Heart right ventricle (tissue), 16 donors: ENCODE measurements at regions of chr20 and their contacts with region 1.

Region 1: GRCh38 chr20:48769069-48769879 is 58.5 kb downstream of the PREX1 start:
- DNase-seq: no peak
- ATAC-seq: peak in 1 of 8 donors; percentile 29
- H3K4me3 ChIP-seq: no peak overlapping the region
- H3K27ac ChIP-seq: peak overlapping the region in 1 of 10 donors; percentile 88
- H3K4me1 ChIP-seq: peaks cover 3 to 94% (median 18%) of the 10 kb centered on the region in 9 donors
- H3K27me3 ChIP-seq: peaks cover 0 to 6% (median 0%) of the 10 kb centered on the region in 7 donors
- CTCF ChIP-seq: no peak

Region 2: GRCh38 chr20:48818407-48818987 is 49.2 kb after region 1 on chr20:
- intact Hi-C with region 1: loop called in 1 of 10 experiments (anchors 5 kb)
- DNase-seq: no peak
- ATAC-seq: peak in 1 of 8 donors; percentile 22
- H3K4me3 ChIP-seq: peak overlapping the region in 1 of 10 donors; percentile 20
- H3K27ac ChIP-seq: peak overlapping the region in 2 of 10 donors; percentile 8 to 97
- H3K4me1 ChIP-seq: peaks cover 0 to 100% (median 8%) of the 10 kb centered on the region in 9 donors
- H3K27me3 ChIP-seq: no peaks in the 10 kb centered on the region
- CTCF ChIP-seq: no peak